ENCODE measurements at regions of chr11 and their contacts with region 1.

Region 1: GRCh38 chr11:112113539-112114457 is 27.1 kb downstream of the SDHD start:
- DNase-seq: peak; percentile 82
- H3K4me3 ChIP-seq: no peak overlapping the region
- H3K27ac ChIP-seq: no peak overlapping the region
- H3K4me1 ChIP-seq: peaks cover 5% of the 10 kb centered on the region
- H3K27me3 ChIP-seq: no peaks in the 10 kb centered on the region
- CTCF ChIP-seq: peak; percentile 76

Region 2: DNA sequence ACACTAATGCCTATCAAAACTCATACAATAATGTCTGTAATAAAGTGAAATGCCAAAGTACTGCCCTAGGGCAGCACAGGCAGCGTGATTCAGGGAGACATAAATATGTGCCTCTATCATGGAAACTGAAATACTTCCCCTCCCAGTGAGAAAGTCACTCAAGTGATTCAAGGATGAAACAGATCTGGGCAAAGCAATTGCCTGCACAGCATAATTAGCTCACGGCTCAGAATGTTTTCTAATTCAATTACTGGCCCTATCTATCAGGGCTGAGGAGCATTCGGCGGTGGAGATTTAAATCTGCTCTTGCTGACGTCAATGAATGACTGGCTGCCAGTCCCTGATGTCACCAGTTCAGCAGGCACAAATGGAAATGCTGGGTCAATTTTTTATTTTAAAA is 319.9 kb before region 1 on chr11:
- CTCF ChIA-PET with region 1: no interaction called
- POLR2A ChIA-PET with region 1: interaction called, 10 read pairs
- intact Hi-C with region 1: no loop called
- DNase-seq: peak; percentile 93
- H3K4me3 ChIP-seq: no peak overlapping the region
- H3K27ac ChIP-seq: peak overlapping the region; percentile 37
- H3K4me1 ChIP-seq: peaks cover 33% of the 10 kb centered on the region
- H3K27me3 ChIP-seq: no peaks in the 10 kb centered on the region
- CTCF ChIP-seq: no peak

Region 3: GRCh38 chr11:111860257-111860656 is 253.5 kb before region 1 on chr11:
- CTCF ChIA-PET with region 1: no interaction called
- POLR2A ChIA-PET with region 1: no interaction called
- intact Hi-C with region 1: no loop called
- DNase-seq: no peak
- H3K4me3 ChIP-seq: no peak overlapping the region
- H3K27ac ChIP-seq: no peak overlapping the region
- H3K4me1 ChIP-seq: no peaks in the 10 kb centered on the region
- H3K27me3 ChIP-seq: no peaks in the 10 kb centered on the region
- CTCF ChIP-seq: no peak

Region 4: GRCh38 chr11:112100462-112100861 is 13.3 kb before region 1 on chr11:
- CTCF ChIA-PET with region 1: interaction called, 6 read pairs
- POLR2A ChIA-PET with region 1: interaction called, 11 read pairs
- intact Hi-C with region 1: no loop called
- DNase-seq: no peak
- H3K4me3 ChIP-seq: no peak overlapping the region
- H3K27ac ChIP-seq: no peak overlapping the region
- H3K4me1 ChIP-seq: no peaks in the 10 kb centered on the region
- H3K27me3 ChIP-seq: no peaks in the 10 kb centered on the region
- CTCF ChIP-seq: no peak

Region 5: GRCh38 chr11:112174789-112175598 is 61.2 kb after region 1 on chr11 and contains the start of gene BCO2:
- CTCF ChIA-PET with region 1: interaction called, 10 read pairs
- POLR2A ChIA-PET with region 1: no interaction called
- intact Hi-C with region 1: loop called (anchors 1 kb)
- DNase-seq: peak; percentile 77
- H3K4me3 ChIP-seq: peak within 1 kb of the TSS; percentile 30
- H3K27ac ChIP-seq: no peak within 1 kb of the TSS
- H3K4me1 ChIP-seq: peaks cover 14% of the 10 kb centered on the region
- H3K27me3 ChIP-seq: no peaks in the 10 kb centered on the region
- CTCF ChIP-seq: peak; percentile 98
- total RNA-seq, gene BCO2: 2.5 and 2.6 TPM in 2 replicates